ENCODE measurements at regions of chr19 and their contacts with region 1.

Region 1: DNA sequence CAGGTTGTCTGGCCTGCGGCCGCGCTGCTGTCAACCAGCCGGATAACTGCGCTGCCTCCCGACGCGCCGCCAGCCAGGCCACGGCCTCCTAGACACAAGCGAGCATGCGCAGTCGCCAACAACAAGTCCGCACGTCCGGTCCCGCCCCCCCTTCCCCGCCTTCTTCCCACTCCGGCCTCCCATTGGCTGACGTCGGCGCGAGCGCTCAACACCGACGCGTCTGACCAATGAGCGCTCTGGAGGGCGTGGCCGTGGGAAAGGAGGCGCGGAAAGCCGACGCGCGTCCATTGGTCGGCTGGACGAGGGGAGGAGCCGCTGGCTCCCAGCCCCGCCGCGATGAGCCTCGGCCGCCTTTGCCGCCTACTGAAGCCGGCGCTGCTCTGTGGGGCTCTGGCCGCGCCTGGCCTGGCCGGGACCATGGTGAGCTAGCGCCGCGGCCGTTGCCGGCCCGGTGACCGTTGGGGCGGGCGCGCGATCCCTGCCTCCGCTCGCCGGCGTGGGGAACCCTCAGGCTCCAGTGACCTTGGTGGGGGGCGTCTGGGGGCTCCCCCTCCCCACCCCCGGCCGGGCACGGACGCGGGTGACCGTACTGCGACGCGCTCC is at the start of gene GPX4:
- DNase-seq: peak; percentile 100
- total RNA-seq, gene GPX4: 176 to 193 TPM

Region 2: DNA sequence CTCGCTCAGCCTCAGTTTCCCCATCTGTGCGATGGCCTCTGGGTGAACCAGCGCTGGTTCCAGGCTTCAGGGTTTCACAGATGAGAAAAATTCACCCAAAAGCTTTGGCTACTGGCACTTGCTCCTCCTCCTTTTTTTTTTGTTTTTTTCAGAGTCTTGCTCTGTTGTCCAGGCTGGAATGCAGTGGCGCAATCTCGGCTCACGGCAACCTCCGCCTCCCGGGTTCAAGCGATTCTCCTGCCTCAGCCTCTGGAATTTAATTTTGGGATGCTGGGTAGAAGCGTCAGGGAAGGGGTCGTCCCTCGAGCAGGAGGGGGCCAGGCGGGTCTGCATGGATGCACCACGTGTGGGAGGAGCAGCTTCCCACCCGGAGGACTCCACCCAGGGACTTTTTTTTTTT is 415.6 kb before region 1 on chr19:
- intact Hi-C with region 1: no loop called
- DNase-seq: no peak

Region 3: GRCh38 chr19:917323-918151 is 186.3 kb before region 1 on chr19 and contains the start of gene KISS1R:
- intact Hi-C with region 1: no loop called
- DNase-seq: no peak
- total RNA-seq, gene KISS1R: not detected

Region 4: DNA sequence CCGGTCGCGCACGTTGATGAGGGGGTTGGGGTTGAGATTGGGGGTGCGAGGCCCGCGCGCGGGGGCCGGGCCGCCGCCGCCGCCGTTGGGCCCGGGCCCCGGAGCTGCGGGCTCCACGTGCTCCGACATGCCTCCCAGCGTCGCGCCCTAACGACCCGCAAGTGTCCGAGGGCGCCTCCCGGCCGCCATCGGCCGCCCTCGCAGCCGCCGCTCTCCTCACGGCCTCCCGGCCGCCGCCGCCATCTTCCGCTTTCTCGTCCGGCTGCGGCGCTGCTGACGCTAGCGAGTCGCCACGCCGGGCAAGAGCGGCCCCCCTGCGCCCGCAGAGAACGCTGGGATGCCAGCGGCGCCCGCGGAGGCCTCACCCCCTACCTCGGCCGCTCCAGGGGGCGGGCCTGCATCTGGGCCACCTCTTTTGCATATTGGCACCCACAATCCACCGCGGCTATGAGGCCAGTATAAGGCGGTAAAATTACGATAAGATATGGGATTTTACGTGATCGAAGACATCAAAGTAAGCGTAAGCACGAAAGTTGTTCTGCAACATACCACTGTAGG is 82.9 kb before region 1 on chr19 and contains the start of gene TMEM259:
- intact Hi-C with region 1: loop called in 1 of 2 experiments (anchors 5 kb)
- DNase-seq: peak; percentile 99
- total RNA-seq, gene TMEM259: 96.5 to 99.8 TPM

Region 5: DNA sequence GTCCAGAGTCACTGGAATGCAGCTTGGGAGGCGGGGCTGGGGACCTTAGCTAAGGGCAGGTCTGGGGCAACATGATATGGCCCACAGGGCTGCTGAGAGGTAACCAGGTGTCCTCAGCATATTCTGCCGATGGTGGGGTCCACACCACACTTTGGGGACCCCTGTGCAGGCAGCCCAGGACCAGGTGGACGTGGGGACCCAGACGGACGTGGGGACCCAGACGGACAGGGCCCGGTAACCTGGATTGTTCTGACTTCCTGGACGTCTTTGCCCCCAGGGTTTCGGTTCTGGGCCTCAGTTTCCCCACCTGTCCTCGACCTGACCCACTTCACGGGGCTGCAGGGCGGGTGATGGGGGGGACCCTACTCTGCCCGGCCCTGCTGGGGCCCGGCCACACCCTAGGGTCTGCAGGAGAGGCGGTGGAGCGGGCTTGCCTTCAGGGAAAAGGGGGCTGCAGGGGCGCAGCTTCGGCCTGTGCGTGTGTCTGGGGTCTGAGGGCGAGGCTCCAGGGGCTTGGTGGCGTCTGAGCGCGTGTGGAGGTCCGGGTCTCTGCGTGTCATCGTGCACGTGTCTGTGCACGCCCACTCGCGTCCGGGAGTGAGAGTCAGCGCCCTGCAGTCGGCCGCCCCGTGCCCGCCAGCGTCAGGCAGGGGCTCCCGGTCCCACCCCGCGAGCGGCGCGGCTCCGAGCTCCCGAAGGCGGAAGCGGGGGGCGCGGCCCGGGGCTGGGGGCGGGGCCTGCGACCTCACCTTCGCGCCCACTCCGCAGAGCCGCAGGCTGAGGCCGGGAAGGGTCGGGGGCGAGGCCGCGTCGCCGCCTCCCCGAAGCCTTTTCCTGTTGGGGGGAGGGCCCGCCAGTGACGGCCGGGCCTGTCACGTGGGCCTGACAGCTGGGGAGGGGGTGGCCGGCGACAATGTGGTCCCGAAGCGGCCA is 37.1 kb before region 1 on chr19 and contains the start of gene ARHGAP45:
- intact Hi-C with region 1: loop called in 1 of 2 experiments (anchors 1 kb)
- DNase-seq: no peak
- total RNA-seq, gene ARHGAP45: 10.0 to 26.8 TPM

Region 6: DNA sequence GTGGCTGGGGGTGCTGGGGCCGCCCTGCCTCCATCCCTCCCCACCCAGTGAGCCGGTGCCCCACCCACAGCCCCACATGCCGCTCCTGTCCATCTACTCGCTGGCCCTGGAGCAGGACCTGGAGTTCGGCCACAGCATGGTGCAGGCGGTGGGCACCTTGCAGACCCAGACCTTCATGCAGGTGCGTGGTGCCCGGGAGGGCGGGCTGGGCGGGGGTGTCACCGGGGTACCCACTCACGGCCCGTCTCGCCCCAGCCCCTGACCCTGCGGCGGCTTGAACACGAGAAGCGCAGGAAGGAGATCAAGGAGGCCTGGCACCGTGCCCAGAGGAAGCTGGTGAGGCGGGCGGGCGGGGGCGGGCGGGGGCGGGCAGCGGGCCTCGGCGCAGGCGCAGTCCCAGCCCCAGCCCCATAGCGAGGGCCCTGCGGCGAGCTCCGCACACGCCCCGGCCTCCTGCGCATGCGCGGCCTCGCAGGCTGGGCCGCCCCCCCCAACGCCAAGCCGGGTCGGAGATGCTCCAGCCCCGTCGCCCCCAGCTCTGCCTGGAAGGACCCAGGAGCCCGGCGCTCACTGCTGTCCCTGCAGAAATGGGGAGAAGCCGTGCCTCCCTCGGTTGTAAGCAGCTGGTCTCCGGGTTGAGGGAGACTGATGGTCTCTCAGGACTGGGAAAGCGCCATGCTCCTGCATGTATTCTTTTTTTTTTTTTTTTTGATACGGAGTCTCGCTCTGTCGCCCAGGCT is 29.1 kb before region 1 on chr19:
- intact Hi-C with region 1: loop called in 1 of 2 experiments (anchors 1 kb)
- DNase-seq: peak; percentile 97